ENCODE measurements at regions of chr6 and their contacts with region 1.

Region 1: GRCh38 chr6:24699521-24700359 is 19.2 kb downstream of the C6orf62 start:
- DNase-seq: no peak
- ATAC-seq: no peak
- H3K4me3 ChIP-seq: no peak overlapping the region
- H3K27ac ChIP-seq: no peak overlapping the region
- H3K4me1 ChIP-seq: no peaks in the 10 kb centered on the region
- H3K27me3 ChIP-seq: no peaks in the 10 kb centered on the region
- CTCF ChIP-seq: no peak

Region 2: DNA sequence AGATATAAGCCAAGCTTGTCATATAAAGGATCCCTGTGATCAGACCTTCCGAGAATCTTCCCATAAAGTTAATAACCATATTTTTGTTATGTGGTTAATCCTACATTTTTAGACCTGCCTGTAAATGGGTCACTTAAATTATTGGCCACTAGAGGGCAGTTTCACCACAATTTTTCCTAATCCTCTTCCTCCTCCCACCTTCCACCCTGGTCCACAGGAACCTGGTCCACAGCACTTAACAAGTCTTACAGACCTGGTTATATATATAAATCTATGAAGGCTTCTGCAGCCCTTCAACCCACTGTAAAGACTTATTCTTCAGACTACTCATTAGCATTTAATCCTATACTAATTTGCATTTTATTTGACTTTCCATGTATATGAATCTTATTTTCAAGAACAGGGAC is 268.7 kb before region 1 on chr6:
- CTCF ChIA-PET with region 1: no interaction called
- POLR2A ChIA-PET with region 1: no interaction called
- intact Hi-C with region 1: loop called (anchors 5 kb)
- DNase-seq: peak; percentile 74
- ATAC-seq: peak; percentile 27; the same call in 1 of the 2 replicates
- H3K4me3 ChIP-seq: no peak overlapping the region
- H3K27ac ChIP-seq: no peak overlapping the region
- H3K4me1 ChIP-seq: peaks cover 37% of the 10 kb centered on the region
- H3K27me3 ChIP-seq: no peaks in the 10 kb centered on the region
- CTCF ChIP-seq: peak; percentile 89

Region 3: DNA sequence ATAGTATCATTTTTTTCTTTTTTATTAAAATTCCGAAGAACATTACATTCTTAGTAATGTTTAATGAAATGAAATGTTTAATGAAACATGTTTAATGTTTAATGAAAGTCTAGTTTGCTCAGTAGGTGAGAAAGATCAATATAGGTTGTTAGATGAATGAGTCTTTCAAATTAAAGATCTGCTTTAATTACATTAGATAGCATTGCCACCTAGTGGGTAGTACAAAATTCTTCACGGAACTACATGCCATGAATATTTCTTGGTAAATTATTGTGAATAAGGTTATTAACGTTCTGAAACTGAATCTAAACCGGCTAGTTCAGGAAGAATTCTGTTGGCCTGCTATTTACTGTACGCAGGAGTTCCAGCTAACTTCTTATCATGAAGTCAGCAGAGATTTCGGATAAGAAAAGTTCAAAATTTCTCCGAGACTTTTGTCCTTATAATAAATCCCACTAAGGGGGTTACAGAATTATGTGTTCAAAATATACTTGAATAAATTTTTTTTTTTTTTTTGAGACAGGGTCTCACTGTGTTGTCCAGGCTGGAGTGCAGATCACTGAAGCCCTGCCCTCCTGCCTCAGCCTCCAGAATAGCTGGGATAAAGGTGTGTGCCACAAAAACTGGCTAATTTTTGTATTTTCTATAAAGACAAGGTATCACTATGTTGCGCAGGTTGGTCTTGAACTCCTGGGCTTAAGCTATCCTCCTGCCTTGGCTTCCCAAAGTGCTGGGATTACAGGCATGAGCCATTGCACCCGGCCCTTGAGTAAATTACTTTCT is 67.1 kb after region 1 on chr6:
- CTCF ChIA-PET with region 1: no interaction called
- POLR2A ChIA-PET with region 1: no interaction called
- intact Hi-C with region 1: loop called (anchors 2 kb)
- DNase-seq: peak; percentile 62
- ATAC-seq: peak; percentile 75
- H3K4me3 ChIP-seq: no peak overlapping the region
- H3K27ac ChIP-seq: no peak overlapping the region
- H3K4me1 ChIP-seq: no peaks in the 10 kb centered on the region
- H3K27me3 ChIP-seq: no peaks in the 10 kb centered on the region
- CTCF ChIP-seq: peak; percentile 84

Region 4: DNA sequence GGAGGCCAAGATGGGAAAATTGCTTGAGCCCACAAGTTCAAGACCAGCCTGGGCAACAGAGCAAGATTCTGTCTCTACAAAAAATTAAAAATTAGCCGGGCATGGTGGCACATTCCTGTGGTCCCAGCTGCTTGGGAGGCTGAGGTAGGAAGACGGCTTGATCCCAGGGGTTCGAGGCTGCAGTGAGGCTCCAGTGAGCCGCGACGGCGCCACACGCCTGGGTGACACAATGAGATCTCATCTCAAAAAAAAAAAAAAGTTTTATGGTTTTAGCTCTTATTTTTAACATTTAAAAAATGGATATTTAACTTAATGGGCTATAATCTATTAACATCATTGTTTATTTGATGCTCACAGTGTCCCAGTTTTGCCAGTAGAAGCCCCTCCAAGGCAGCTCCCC is 333.2 kb after region 1 on chr6:
- CTCF ChIA-PET with region 1: no interaction called
- POLR2A ChIA-PET with region 1: interaction called, 10 read pairs
- intact Hi-C with region 1: no loop called
- DNase-seq: no peak
- ATAC-seq: no peak
- H3K4me3 ChIP-seq: no peak overlapping the region
- H3K27ac ChIP-seq: no peak overlapping the region
- H3K4me1 ChIP-seq: no peaks in the 10 kb centered on the region
- H3K27me3 ChIP-seq: no peaks in the 10 kb centered on the region
- CTCF ChIP-seq: no peak

Measured in PC-3 (cell line).